ENCODE measurements at regions of chr2 and their contacts with region 1.

Region 1: GRCh38 chr2:44102790-44103562 is 65.7 kb upstream of the PPM1B start:
- DNase-seq: no peak
- H3K4me3 Mint-ChIP-seq: no peak overlapping the region
- H3K27ac Mint-ChIP-seq: no peak overlapping the region
- H3K4me1 Mint-ChIP-seq: peaks cover 40% of the 10 kb centered on the region
- H3K27me3 Mint-ChIP-seq: no peaks in the 10 kb centered on the region

Region 2: GRCh38 chr2:44075541-44075940 is 27.4 kb before region 1 on chr2:
- intact Hi-C with region 1: no loop called
- DNase-seq: no peak
- H3K4me3 Mint-ChIP-seq: no peak overlapping the region
- H3K27ac Mint-ChIP-seq: no peak overlapping the region
- H3K4me1 Mint-ChIP-seq: no peaks in the 10 kb centered on the region
- H3K27me3 Mint-ChIP-seq: peaks cover 2% of the 10 kb centered on the region

Region 3: GRCh38 chr2:44120428-44120827 is 17.5 kb after region 1 on chr2:
- intact Hi-C with region 1: loop called (anchors 1 kb)
- DNase-seq: peak; percentile 31
- H3K4me3 Mint-ChIP-seq: no peak overlapping the region
- H3K27ac Mint-ChIP-seq: peak overlapping the region; percentile 33
- H3K4me1 Mint-ChIP-seq: peaks cover 32% of the 10 kb centered on the region
- H3K27me3 Mint-ChIP-seq: no peaks in the 10 kb centered on the region